Thyroid gland (tissue), 4 donors: ENCODE measurements at regions of chr9 and their contacts with region 1.

Region 1: DNA sequence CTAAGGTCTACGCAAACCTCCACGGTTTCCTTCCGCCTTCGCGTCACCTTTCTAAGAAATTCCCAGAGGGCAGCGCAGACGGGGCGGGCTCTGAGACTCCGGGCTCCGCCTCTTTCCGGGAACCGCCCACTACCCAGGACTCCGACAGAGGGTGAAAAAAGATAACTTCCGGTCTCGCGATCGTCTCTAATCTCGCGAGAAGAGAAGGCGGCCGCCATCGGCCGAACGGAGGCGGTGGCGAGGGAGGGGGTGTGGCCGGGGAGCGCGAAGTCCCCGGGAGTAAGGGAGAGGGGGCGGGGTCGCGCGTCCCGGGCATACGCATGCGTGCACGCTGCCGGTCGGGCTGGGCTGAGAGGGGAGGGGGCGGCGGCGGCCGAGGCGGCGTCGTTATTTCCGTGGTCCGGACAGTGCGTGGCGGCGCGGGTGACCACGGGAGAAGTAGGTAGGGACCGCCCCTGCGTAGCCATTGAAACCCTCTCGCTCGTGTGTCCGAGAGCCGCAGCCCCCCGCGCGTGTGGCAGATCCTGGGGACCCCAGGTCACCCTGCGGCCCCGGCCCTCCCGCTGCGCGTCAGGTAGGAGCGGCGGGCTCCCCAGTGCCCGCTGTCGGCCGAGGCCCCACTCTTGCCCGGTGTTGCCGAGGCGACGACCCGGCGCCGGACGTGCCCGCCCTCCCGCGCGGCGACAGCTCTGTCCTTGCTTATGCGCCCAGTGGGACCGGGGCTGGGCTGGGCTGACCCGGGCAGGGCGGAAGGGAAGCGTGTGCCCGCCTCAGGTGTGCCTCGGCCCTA is at the start of gene NAA35:
- DNase-seq: peak; percentile 98 to 99
- H3K4me3 ChIP-seq: peak within 1 kb of the TSS; percentile 29 to 88 (median 78)
- H3K27ac ChIP-seq: peak within 1 kb of the TSS; percentile 89 to 96 (median 91)
- H3K4me1 ChIP-seq: peaks cover 15 to 17% of the 10 kb centered on the region in 2 donors
- H3K27me3 ChIP-seq: no peaks in the 10 kb centered on the region
- CTCF ChIP-seq: peak in 1 of 6 experiments; percentile 14
- POLR2A ChIP-seq: peak in 1 of 2 donors; percentile 93
- total RNA-seq, gene NAA35: 23.2 to 31.1 (median 26.2) TPM

Region 2: DNA sequence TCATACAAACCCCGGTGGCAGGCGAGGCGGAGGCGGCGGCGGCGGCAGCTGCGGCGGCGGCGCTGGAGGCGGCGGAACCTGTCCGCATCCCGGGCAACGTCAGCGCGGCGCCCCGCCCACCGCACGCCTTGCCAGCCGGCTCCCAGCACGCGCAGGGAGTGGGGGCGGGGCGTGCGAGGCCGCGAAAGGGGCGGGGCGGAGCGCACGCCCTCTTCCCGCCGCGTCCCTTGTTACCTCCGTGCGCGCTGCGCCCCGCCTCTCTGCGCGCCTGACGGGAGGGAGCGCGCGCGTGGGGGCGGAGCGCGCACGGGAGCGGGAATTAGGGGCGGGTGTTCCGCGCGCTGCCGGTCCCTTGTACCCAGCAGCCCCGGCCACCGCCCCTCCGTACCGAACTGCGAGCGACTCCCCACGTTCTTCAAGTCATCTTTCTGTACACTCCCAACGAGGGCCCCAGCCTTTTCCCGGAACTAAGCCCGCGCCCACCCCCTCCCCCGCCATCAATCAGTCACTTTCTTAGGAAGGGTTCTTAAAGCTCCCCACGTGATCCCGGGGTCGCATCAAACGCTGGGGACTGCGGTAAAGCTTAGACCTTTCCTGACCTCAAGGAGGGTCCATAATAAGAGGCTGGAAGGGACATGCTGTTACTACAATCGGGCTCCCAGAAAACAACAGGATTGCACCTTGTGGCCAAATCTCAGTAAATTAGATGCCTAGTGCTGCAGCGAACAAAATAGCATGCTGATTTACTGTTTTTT is 199.0 kb before region 1 on chr9 and contains the start of gene AGTPBP1:
- intact Hi-C with region 1: loop called (anchors 10 kb)
- DNase-seq: peak; percentile 95 to 97
- H3K4me3 ChIP-seq: peak within 1 kb of the TSS; percentile 49 to 96 (median 96)
- H3K27ac ChIP-seq: peak within 1 kb of the TSS; percentile 35 to 91 (median 78)
- H3K4me1 ChIP-seq: peaks cover 3 to 4% of the 10 kb centered on the region in 2 donors
- H3K27me3 ChIP-seq: no peaks in the 10 kb centered on the region
- CTCF ChIP-seq: peak in 1 of 6 experiments; percentile 29
- POLR2A ChIP-seq: peak in 1 of 2 donors; percentile 82
- total RNA-seq, gene AGTPBP1: 18.2 to 23.3 (median 22.0) TPM

Region 3: DNA sequence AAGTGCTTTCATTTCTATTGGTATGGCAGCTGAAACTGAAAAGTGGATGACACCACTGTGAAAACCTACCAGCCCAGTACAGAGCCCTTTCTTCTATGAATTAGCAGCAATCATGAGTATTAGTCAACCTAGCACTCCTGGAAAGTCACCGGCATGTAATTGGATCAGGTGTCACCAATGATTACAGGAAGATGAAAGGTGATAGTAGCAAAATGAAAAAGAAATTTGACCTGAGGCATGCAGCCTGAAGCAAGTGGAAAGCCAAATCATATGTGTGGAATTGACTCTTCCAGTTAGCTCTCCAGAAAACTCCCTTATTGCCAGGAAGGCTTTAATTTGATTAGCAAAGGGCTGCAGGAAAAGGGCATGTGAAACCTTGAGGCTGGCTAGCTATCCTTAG is 81.3 kb before region 1 on chr9:
- intact Hi-C with region 1: no loop called
- DNase-seq: no peak
- H3K4me3 ChIP-seq: no peak overlapping the region
- H3K27ac ChIP-seq: no peak overlapping the region
- H3K4me1 ChIP-seq: no peaks in the 10 kb centered on the region
- H3K27me3 ChIP-seq: no peaks in the 10 kb centered on the region
- CTCF ChIP-seq: no peak
- POLR2A ChIP-seq: no peak

Region 4: DNA sequence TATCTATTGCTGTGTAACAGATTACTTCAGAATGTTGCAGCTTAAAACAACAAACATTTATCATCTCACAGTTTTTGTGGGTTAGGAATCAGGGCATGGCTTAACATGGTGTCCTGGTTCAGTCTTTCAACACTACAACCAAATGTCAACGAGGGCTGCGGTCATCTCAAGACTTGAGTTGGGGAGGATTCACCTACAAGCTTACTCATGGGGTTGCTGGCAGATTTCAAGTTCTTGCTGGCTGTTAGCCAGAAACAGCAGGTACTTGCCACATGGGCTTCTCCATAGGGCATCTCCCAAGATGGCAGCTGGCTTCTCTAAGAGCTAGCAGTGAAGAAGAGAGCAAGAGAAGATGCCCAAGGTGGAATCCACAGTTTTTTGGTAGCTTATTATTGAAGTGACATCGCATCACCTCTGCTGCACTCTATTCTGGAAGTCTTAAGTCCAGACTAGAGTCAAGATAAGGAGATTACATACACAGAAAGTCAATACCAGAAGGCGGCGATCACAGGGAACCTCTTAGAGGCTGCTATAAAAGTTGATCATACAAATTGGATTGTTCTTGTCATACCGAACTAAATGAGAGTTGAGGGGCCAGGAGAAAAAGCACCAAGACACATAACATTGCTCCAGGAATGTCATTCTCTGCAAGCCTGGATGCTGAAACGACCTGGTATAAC is 276.2 kb after region 1 on chr9:
- intact Hi-C with region 1: no loop called
- DNase-seq: no peak
- H3K4me3 ChIP-seq: no peak overlapping the region
- H3K27ac ChIP-seq: no peak overlapping the region
- H3K4me1 ChIP-seq: no peaks in the 10 kb centered on the region
- H3K27me3 ChIP-seq: no peaks in the 10 kb centered on the region
- CTCF ChIP-seq: no peak
- POLR2A ChIP-seq: no peak